ENCODE measurements at regions of chr2 and their contacts with region 1.

Region 1: GRCh38 chr2:30711646-30712085 is 95.6 kb downstream of the CAPN13 start:
- DNase-seq: peak; percentile 49
- H3K4me3 ChIP-seq: no peak overlapping the region
- CTCF ChIP-seq: peak; percentile 98

Region 2: GRCh38 chr2:30146438-30147147 is 565.1 kb before region 1 on chr2 and contains the start of gene YPEL5:
- CTCF ChIA-PET with region 1: interaction called, 14 read pairs
- POLR2A ChIA-PET with region 1: no interaction called
- DNase-seq: peak; percentile 97
- H3K4me3 ChIP-seq: peak within 1 kb of the TSS; percentile 82
- CTCF ChIP-seq: no peak

Region 3: DNA sequence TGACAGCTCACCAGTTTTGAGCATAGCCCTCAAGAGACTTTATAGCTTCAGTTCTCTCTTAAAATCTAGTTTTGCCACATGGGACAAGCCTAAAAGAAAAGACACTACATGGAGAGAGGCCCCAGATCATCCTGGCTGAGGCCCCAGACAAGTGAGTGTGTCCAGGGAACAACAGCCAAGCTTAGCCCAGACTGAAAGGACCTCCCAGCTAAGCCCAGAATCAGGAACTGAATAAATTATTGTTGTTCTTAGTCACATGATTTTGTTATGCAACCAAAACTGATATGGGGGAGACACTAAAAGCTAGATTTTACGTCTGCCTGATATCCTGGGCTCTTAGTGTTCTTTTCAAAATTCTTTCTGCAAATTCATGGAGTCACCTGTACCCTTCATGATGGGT is 509.7 kb before region 1 on chr2:
- CTCF ChIA-PET with region 1: interaction called, 504 read pairs
- POLR2A ChIA-PET with region 1: no interaction called
- DNase-seq: no peak
- H3K4me3 ChIP-seq: no peak overlapping the region
- CTCF ChIP-seq: no peak

Region 4: DNA sequence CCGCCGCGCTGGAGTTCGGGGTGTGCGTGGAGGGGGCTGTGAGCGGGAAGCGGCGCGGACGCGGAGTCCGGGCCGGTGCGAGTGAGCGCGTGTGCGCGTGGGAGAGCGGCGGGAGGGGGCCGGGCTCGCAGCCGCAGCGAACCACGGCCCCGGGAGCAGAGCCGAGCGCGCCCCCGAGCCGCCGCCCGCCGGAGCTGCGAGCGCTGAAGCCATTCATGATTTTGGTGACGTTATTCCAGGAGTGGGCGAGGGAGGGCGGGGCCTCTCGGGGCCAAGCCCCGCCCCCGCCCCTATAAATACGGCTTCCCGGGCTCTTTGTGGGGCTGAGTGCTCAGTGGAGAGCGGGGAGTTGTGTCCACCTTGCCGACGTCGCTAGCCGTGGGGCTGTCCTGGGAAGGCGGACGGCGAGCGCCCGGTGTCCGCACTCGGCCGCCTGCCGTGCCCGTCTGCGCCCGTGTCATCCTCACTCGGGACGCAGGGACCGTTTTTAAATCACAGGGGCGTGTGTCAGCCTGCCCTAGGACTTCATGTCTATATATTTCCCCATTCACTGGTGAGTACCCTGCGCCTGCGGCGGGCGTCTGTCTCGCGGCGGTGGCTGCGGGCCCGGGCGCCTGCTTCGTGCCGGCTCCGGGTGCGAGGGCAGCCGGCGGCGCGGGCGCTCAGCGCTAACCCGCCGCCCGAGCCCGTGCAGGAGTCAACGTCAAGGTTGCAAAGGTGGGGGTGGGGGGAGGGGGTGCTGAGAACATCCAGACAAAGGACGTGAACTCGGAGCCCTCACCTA is 480.3 kb before region 1 on chr2 and contains the start of gene LBH:
- CTCF ChIA-PET with region 1: interaction called, 35 read pairs
- POLR2A ChIA-PET with region 1: interaction called, 5 read pairs
- DNase-seq: peak; percentile 41
- H3K4me3 ChIP-seq: peak within 1 kb of the TSS; percentile 80
- CTCF ChIP-seq: no peak

Region 5: GRCh38 chr2:30472326-30472725 is 239.3 kb before region 1 on chr2:
- CTCF ChIA-PET with region 1: interaction called, 21 read pairs
- POLR2A ChIA-PET with region 1: no interaction called
- DNase-seq: no peak
- H3K4me3 ChIP-seq: no peak overlapping the region
- CTCF ChIP-seq: no peak

Region 6: DNA sequence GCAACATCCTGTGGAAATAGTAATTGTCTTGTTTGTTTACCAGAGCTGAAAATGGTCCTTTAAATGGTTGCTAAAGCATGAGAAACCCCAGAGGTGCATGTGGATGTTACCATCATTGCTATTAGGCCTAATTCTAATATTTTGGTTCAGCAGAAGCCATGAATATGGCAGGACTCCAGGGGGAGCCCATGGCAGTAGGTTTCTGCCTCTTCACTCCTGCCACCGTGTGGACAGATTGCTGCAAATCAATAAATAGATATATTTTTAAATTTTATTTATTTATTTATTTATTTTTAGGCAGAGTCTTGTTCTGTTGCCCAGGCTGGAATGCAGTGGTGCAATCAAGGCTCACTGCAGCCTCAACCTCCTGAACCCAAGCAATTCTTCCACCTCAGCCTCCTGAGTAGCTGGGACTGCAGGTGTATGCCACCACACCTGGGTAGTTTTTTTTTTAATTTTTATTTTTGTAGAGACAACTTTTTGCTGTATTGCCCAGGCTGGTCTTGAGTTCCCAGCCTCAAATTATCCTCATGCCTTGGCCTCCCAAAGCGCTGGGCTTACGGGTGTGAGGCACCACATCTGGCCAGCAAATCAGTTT is 150.5 kb after region 1 on chr2:
- CTCF ChIA-PET with region 1: interaction called, 78 read pairs
- POLR2A ChIA-PET with region 1: no interaction called
- DNase-seq: peak; percentile 17
- H3K4me3 ChIP-seq: no peak overlapping the region
- CTCF ChIP-seq: peak; percentile 68

Region 7: DNA sequence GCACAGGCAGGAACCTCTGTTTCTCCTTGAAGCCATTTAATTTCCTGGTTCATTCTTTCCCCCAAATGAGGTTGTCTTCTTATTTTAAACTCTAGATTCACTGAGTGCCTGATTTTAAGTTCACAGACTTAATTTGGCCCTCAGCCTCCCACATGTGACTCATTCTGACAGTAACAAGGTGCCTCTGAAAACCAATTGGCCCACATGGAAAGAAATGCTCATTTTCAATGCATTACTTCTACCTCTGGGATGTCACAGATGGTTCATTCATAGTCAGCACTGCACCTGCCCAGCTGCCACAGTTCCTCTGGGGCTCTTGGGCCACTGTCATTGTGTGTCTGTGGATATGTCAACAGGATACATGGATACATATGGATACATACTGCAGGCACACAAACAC is 236.0 kb after region 1 on chr2:
- CTCF ChIA-PET with region 1: no interaction called
- POLR2A ChIA-PET with region 1: no interaction called
- DNase-seq: no peak
- H3K4me3 ChIP-seq: no peak overlapping the region
- CTCF ChIP-seq: no peak

Region 8: GRCh38 chr2:31089645-31090044 is 378.0 kb after region 1 on chr2:
- CTCF ChIA-PET with region 1: no interaction called
- POLR2A ChIA-PET with region 1: no interaction called
- DNase-seq: no peak
- H3K4me3 ChIP-seq: no peak overlapping the region
- CTCF ChIP-seq: no peak

Region 9: DNA sequence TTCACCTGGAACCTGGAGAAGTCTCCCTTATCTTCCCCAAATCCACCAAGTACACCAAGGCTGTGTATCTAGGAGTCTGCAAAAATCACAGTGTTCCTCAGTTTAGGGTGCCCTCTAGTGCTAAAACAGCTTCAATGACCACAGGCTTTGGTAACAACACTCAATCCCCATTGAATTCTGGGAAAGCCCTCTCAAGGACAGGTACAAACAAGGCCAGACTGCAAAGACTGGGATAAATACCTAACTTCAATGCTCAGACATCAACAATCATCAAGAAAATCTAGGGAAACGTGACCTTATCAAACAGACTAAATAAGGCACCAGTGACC is 1018.1 kb after region 1 on chr2:
- CTCF ChIA-PET with region 1: interaction called, 14 read pairs
- POLR2A ChIA-PET with region 1: no interaction called
- DNase-seq: peak; percentile 4
- H3K4me3 ChIP-seq: no peak overlapping the region
- CTCF ChIP-seq: peak; percentile 60